Activated CD4-positive, alpha-beta T cell treated with anti-CD3 and anti-CD28 coated beads, Interleukin-2, amount 10 ng/mL, durations not matched to agents 24 days and 14 days (primary cell): ENCODE measurements at regions of chr1 and their contacts with region 1.

Region 1: GRCh38 chr1:94045465-94046056 is 75.4 kb downstream of the ABCA4 start:
- DNase-seq: peak; percentile 77
- H3K4me3 Mint-ChIP-seq: peak overlapping the region; percentile 45
- H3K27ac Mint-ChIP-seq: no peak overlapping the region
- H3K4me1 Mint-ChIP-seq: peaks cover 6% of the 10 kb centered on the region
- H3K27me3 Mint-ChIP-seq: peaks cover 26% of the 10 kb centered on the region

Region 2: GRCh38 chr1:93964777-93965200 is 80.8 kb before region 1 on chr1:
- intact Hi-C with region 1: no loop called
- DNase-seq: no peak
- H3K4me3 Mint-ChIP-seq: no peak overlapping the region
- H3K27ac Mint-ChIP-seq: no peak overlapping the region
- H3K4me1 Mint-ChIP-seq: no peaks in the 10 kb centered on the region
- H3K27me3 Mint-ChIP-seq: no peaks in the 10 kb centered on the region

Region 3: DNA sequence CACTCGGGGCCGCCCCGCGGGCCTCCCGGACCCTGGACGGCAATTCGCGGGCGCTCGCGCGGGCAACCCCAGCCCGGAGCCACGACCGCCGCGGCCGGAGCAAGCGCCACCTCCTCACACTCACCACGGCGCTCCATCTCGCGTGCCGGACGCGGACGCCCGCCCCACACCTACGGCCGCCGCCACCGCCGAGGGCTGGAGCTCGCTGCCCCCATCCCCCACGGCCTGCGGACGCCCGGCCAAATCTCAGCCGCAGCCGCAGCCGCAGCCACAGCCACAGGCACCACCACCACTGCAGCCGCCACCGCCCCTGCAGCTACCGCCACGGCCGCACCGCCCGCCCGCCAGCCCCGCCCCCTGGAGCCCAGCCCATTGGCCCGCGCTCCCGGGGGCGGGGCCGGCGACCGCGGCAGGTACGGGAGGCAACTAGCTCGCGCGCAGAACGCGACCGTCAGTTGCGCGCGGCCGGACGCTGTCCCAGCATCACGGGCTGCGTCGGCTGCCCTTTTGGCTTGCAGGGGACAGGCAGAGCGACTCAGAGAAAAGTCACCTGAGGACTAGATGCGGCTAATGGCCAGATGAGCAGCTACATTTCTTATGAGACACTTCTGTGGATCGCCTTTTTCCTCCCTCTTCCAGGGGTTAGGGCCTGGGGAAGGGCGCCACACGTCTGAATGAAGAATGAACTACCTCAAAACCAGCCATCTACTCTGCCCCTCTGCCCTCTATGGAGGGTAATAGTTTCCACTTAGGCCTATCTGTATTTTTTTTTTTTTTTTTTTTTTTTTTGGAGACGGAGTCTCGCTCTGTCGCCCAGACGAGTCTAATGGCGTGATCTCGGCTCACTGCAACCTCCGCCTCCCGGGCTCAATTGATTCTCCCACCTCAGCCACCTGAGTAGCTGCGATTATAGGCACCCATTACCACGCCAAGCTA is 192.0 kb after region 1 on chr1 and contains the start of gene ARHGAP29:
- intact Hi-C with region 1: loop called (anchors 10 kb)
- DNase-seq: peak; percentile 83
- H3K4me3 Mint-ChIP-seq: peak within 1 kb of the TSS; percentile 47
- H3K27ac Mint-ChIP-seq: no peak within 1 kb of the TSS
- H3K4me1 Mint-ChIP-seq: peaks cover 7% of the 10 kb centered on the region
- H3K27me3 Mint-ChIP-seq: peaks cover 71% of the 10 kb centered on the region
- total RNA-seq, gene ARHGAP29: not detected in 2 replicates

Region 4: GRCh38 chr1:94463765-94464330 is 418.3 kb after region 1 on chr1:
- intact Hi-C with region 1: loop called (anchors 5 kb)
- DNase-seq: peak; percentile 76
- H3K4me3 Mint-ChIP-seq: no peak overlapping the region
- H3K27ac Mint-ChIP-seq: no peak overlapping the region
- H3K4me1 Mint-ChIP-seq: peaks cover 1% of the 10 kb centered on the region
- H3K27me3 Mint-ChIP-seq: no peaks in the 10 kb centered on the region